Dendritic cell treated with granulocyte-macrophage colony-stimulating factor and Interleukin-4, amounts not matched to agents 40 ng/mL and 50 ng/mL, for 4 days (primary cell): ENCODE measurements at regions of chr11 and their contacts with region 1.

Region 1: GRCh38 chr11:67353317-67354074 is at the start of gene POLD4:
- H3K4me3 Mint-ChIP-seq: peak within 1 kb of the TSS; percentile 97
- H3K27ac Mint-ChIP-seq: peak within 1 kb of the TSS; percentile 99
- H3K4me1 Mint-ChIP-seq: peaks cover 77% of the 10 kb centered on the region
- H3K27me3 Mint-ChIP-seq: no peaks in the 10 kb centered on the region

Region 2: GRCh38 chr11:67373925-67374618 is 20.6 kb after region 1 on chr11:
- intact Hi-C with region 1: loop called (anchors 1 kb)
- H3K4me3 Mint-ChIP-seq: peak overlapping the region; percentile 75
- H3K27ac Mint-ChIP-seq: peak overlapping the region; percentile 74
- H3K4me1 Mint-ChIP-seq: peaks cover 66% of the 10 kb centered on the region
- H3K27me3 Mint-ChIP-seq: peaks cover 29% of the 10 kb centered on the region

Region 3: GRCh38 chr11:67382276-67383136 is 29.0 kb after region 1 on chr11:
- intact Hi-C with region 1: loop called (anchors 1 kb)
- H3K4me3 Mint-ChIP-seq: no peak overlapping the region
- H3K27ac Mint-ChIP-seq: peak overlapping the region; percentile 28
- H3K4me1 Mint-ChIP-seq: peaks cover 55% of the 10 kb centered on the region
- H3K27me3 Mint-ChIP-seq: peaks cover 5% of the 10 kb centered on the region

Region 4: DNA sequence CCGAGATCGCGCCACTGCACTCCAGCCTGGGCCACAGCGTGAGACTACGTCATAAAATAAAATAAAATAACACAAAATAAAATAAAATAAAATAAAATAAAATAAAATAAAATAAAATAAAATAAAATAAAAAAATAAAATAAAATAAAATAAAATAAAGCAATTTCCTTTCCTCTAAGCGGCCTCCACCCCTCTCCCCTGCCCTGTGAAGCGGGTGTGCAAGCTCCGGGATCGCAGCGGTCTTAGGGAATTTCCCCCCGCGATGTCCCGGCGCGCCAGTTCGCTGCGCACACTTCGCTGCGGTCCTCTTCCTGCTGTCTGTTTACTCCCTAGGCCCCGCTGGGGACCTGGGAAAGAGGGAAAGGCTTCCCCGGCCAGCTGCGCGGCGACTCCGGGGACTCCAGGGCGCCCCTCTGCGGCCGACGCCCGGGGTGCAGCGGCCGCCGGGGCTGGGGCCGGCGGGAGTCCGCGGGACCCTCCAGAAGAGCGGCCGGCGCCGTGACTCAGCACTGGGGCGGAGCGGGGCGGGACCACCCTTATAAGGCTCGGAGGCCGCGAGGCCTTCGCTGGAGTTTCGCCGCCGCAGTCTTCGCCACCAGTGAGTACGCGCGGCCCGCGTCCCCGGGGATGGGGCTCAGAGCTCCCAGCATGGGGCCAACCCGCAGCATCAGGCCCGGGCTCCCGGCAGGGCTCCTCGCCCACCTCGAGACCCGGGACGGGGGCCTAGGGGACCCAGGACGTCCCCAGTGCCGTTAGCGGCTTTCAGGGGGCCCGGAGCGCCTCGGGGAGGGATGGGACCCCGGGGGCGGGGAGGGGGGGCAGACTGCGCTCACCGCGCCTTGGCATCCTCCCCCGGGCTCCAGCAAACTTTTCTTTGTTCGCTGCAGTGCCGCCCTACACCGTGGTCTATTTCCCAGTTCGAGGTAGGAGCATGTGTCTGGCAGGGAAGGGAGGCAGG is 230.0 kb after region 1 on chr11 and contains the start of gene GSTP1:
- intact Hi-C with region 1: loop called (anchors 10 kb)
- H3K4me3 Mint-ChIP-seq: peak within 1 kb of the TSS; percentile 90
- H3K27ac Mint-ChIP-seq: peak within 1 kb of the TSS; percentile 95
- H3K4me1 Mint-ChIP-seq: peaks cover 84% of the 10 kb centered on the region
- H3K27me3 Mint-ChIP-seq: peaks cover 10% of the 10 kb centered on the region